ENCODE measurements at regions of chr3 and their contacts with region 1.

Region 1: DNA sequence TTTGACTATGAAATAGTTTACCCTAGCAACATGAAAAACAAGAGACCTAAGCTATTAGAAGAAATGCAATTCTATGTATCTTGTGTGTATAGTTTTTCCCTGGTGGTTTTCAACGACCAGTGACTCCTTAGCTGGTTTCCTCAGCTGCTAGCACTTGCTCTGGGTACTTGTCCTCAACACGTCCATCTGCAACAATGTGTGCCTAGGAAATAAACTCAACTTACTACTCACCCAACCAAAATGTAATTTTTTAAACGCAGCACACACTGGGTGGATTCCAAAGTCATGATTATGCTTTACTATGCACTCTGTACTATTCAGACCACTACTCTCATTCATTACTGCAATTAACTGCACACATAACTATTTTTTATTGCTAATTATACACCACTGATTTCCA is 31.0 kb downstream of the CPA3 start:
- DNase-seq: no peak
- H3K4me3 ChIP-seq: no peak overlapping the region
- H3K27me3 ChIP-seq: no peaks in the 10 kb centered on the region
- CTCF ChIP-seq: no peak

Region 2: DNA sequence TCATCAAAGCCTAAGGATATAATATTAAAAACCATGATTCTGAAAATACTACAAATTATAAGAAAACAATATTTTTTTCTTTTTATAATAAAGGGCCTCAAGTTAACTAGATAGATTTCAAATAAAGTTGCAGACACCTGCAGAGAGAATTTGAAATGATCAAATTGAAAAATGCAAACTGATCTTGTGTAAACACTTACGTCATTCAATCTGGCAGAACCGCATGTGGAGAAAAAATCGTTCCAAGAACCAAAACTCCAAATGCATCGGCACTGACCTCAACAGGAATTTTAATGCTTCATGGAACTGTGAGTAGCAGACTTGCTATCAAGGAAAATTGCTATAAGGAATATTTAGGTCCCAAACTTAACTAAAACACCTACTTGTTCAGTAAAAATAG is 13.8 kb before region 1 on chr3:
- CTCF ChIA-PET with region 1: interaction called, 12 read pairs
- POLR2A ChIA-PET with region 1: no interaction called
- DNase-seq: no peak
- H3K4me3 ChIP-seq: no peak overlapping the region
- H3K27me3 ChIP-seq: no peaks in the 10 kb centered on the region
- CTCF ChIP-seq: no peak